ENCODE measurements at regions of chr11 and their contacts with region 1.

Region 1: GRCh38 chr11:63738720-63739360 is 29.7 kb downstream of the ZFTA start:
- DNase-seq: no peak
- H3K4me3 ChIP-seq: no peak overlapping the region
- H3K27ac ChIP-seq: peak overlapping the region in 2 of 8 donors; percentile 15 to 21
- H3K4me1 ChIP-seq: peaks cover 0 to 17% (median 7%) of the 10 kb centered on the region in 6 donors
- H3K27me3 ChIP-seq: no peaks in the 10 kb centered on the region
- CTCF ChIP-seq: peak; percentile 63 to 97 (median 87)
- POLR2A ChIP-seq: no peak

Region 2: GRCh38 chr11:63032457-63032856 is 706.4 kb before region 1 on chr11:
- intact Hi-C with region 1: loop called (anchors 10 kb)
- DNase-seq: no peak
- H3K4me3 ChIP-seq: no peak overlapping the region
- H3K27ac ChIP-seq: no peak overlapping the region
- H3K4me1 ChIP-seq: peaks cover 0 to 4% (median 0%) of the 10 kb centered on the region in 6 donors
- H3K27me3 ChIP-seq: peaks cover 0 to 23% (median 0%) of the 10 kb centered on the region in 7 donors
- CTCF ChIP-seq: no peak
- POLR2A ChIP-seq: no peak

Region 3: DNA sequence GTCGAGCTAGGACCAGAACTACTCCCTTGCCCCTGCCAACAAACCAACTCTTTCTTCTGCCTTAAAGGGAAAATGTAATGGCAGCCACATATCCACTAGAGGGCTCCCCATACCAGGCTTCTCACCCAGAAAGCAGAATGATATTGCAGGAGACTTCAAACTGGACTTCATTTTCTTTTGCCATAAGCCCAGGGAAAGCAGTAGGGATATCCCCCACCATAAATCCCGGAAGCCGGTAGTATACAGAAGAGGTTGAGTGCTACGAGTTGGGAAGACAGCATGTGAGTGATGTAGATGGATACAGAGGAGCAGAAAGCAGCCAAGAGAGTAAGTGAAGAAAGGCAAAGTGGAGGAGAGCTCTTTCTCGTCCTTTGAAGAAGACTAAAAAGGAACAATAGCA is 259.9 kb before region 1 on chr11:
- intact Hi-C with region 1: loop called (anchors 5 kb)
- DNase-seq: no peak
- H3K4me3 ChIP-seq: no peak overlapping the region
- H3K27ac ChIP-seq: no peak overlapping the region
- H3K4me1 ChIP-seq: peaks cover 0 to 9% (median 1%) of the 10 kb centered on the region in 6 donors
- H3K27me3 ChIP-seq: peaks cover 0 to 12% (median 0%) of the 10 kb centered on the region in 7 donors
- CTCF ChIP-seq: peak; percentile 79 to 94 (median 89)
- POLR2A ChIP-seq: no peak